GM12878 (cell line): ENCODE measurements at regions of chr7 and their contacts with region 1.

Region 1: GRCh38 chr7:90736968-90737939 is 141.1 kb downstream of the CDK14 start:
- DNase-seq: peak; percentile 86
- ATAC-seq: peak; percentile 93
- H3K4me3 ChIP-seq: peak overlapping the region; percentile 10; the same call in 1 of the 2 replicates
- H3K27ac ChIP-seq: peak overlapping the region; percentile 81
- H3K4me1 ChIP-seq: peaks cover 20% of the 10 kb centered on the region
- H3K27me3 ChIP-seq: no peaks in the 10 kb centered on the region
- CTCF ChIP-seq: no peak
- EP300 ChIP-seq: peak; percentile 86 to 99
- POLR2A ChIP-seq: no peak
- RAD21 ChIP-seq: no peak

Region 2: GRCh38 chr7:90726623-90727022 is 10.6 kb before region 1 on chr7:
- CTCF ChIA-PET with region 1: interaction called, 6 read pairs
- POLR2A ChIA-PET with region 1: interaction called, 4 read pairs
- RAD21 ChIA-PET with region 1: interaction called, 15 read pairs
- SMC1A ChIA-PET with region 1: interaction called, 11 read pairs
- in situ Hi-C with region 1: no loop called
- intact Hi-C with region 1: no loop called
- DNase-seq: no peak
- ATAC-seq: peak; percentile 38
- H3K4me3 ChIP-seq: peak overlapping the region; percentile 20; the same call in 1 of the 2 replicates
- H3K27ac ChIP-seq: peak overlapping the region; percentile 47; the same call in 1 of the 2 replicates
- H3K4me1 ChIP-seq: peaks cover 10% of the 10 kb centered on the region
- H3K27me3 ChIP-seq: no peaks in the 10 kb centered on the region
- CTCF ChIP-seq: no peak
- EP300 ChIP-seq: no peak
- POLR2A ChIP-seq: no peak
- RAD21 ChIP-seq: no peak

Region 3: GRCh38 chr7:90749262-90749661 is 12.0 kb after region 1 on chr7:
- CTCF ChIA-PET with region 1: interaction called, 17 read pairs
- POLR2A ChIA-PET with region 1: interaction called, 4 read pairs
- RAD21 ChIA-PET with region 1: interaction called, 3 read pairs
- SMC1A ChIA-PET with region 1: interaction called, 11 read pairs
- in situ Hi-C with region 1: no loop called
- intact Hi-C with region 1: no loop called
- DNase-seq: no peak
- ATAC-seq: peak; percentile 22; the same call in 1 of the 3 replicates
- H3K4me3 ChIP-seq: no peak overlapping the region
- H3K27ac ChIP-seq: no peak overlapping the region
- H3K4me1 ChIP-seq: no peaks in the 10 kb centered on the region
- H3K27me3 ChIP-seq: no peaks in the 10 kb centered on the region
- CTCF ChIP-seq: no peak
- EP300 ChIP-seq: no peak
- POLR2A ChIP-seq: no peak
- RAD21 ChIP-seq: no peak

Region 4: GRCh38 chr7:90816511-90817142 is 79.4 kb after region 1 on chr7:
- CTCF ChIA-PET with region 1: no interaction called
- POLR2A ChIA-PET with region 1: no interaction called
- RAD21 ChIA-PET with region 1: interaction called, 4 read pairs
- SMC1A ChIA-PET with region 1: interaction called, 11 read pairs
- in situ Hi-C with region 1: no loop called
- intact Hi-C with region 1: no loop called
- DNase-seq: peak; percentile 85
- ATAC-seq: peak; percentile 99
- H3K4me3 ChIP-seq: no peak overlapping the region
- H3K27ac ChIP-seq: peak overlapping the region; percentile 52
- H3K4me1 ChIP-seq: 0 out of 2 replicates have a peak, but pooled peaks cover 4% of the 10 kb centered on the region
- H3K27me3 ChIP-seq: no peaks in the 10 kb centered on the region
- CTCF ChIP-seq: no peak
- EP300 ChIP-seq: peak in 1 of 2 experiments; percentile 93; a peak in 3 of 4 replicates
- POLR2A ChIP-seq: no peak
- RAD21 ChIP-seq: no peak